ENCODE measurements at regions of chr7 and their contacts with region 1.

Region 1: DNA sequence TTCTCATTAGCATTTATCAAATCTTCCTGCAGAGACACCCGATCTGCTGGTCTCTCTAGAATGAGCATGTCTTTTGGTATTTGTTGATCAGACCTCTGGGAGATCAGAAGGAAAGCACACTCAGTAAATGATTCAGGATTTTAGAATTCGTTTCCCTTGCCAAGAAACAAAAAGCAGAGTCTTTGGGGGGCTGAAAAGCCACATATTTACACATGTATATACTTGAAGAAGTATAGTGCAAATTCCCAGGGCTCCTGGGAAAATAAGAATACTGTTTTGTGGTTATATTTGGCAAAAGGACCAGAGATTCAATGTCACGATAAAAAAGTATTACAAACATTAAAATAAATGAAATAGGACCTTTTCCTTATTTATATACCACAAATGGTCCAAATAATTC is 100.2 kb downstream of the AGMO start:
- DNase-seq: peak; percentile 57
- ATAC-seq: peak; percentile 60
- H3K4me3 ChIP-seq: no peak overlapping the region
- H3K27ac ChIP-seq: peak overlapping the region; percentile 47; the same call in 1 of the 2 replicates
- H3K4me1 ChIP-seq: peaks cover 11% of the 10 kb centered on the region
- H3K27me3 ChIP-seq: 0 out of 2 replicates have a peak, but pooled peaks cover 4% of the 10 kb centered on the region
- CTCF ChIP-seq: no peak

Region 2: DNA sequence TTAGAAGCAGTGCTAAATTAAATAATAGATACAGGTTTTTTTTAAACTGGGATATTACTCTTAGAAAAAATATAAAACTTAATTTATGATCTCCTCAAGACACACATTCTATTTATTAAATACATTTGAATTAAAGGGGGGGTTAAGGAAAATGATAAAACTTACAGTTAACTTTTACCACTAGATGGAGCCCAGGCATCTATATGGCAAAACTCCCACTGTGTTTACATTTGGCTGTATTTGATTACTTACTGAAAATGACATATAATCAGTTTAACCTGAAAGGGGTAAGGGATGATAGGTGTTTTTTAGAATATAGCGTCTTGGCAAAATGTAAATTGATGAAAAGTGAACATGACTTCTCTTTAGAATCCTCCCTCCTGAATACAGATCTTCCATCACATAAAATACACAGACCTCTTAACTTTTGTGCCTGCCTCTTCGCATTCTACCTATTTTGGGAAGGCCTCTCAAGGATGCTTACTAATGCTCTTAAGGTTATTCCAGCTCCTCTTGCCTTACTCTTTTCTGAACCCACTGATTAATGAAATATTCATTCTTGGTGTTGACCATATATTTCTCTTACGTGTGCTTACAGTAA is 135.4 kb before region 1 on chr7:
- CTCF ChIA-PET with region 1: no interaction called
- POLR2A ChIA-PET with region 1: no interaction called
- intact Hi-C with region 1: loop called (anchors 5 kb)
- DNase-seq: peak; percentile 59
- ATAC-seq: peak; percentile 53; the same call in 1 of the 2 replicates
- H3K4me3 ChIP-seq: no peak overlapping the region
- H3K27ac ChIP-seq: no peak overlapping the region
- H3K4me1 ChIP-seq: no peaks in the 10 kb centered on the region
- H3K27me3 ChIP-seq: peaks cover 5% of the 10 kb centered on the region
- CTCF ChIP-seq: peak; percentile 77